HEK293 (cell line): ENCODE measurements at regions of chr6 and their contacts with region 1.

Region 1: DNA sequence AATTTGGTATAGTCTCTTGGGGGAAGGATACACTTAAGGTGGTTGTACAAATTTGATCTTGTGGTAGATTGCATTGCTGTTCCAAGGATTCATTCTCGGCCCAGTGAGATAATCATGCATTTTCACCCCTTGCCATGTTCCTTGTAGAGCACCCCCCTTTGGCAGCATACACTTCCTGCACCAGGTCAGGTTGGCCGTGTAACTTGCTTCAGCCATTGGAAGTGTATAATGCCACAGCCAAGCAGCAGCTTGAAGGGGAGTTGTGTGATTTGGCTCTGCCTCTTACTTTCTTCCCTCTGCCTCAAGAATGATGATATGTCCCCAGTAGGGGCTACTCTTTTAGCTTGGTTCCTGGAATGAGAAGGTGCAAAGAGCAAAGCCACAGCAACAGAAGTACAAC is 21.9 kb downstream of the CCN2 start:
- H3K4me3 ChIP-seq: no peak overlapping the region
- H3K27ac ChIP-seq: no peak overlapping the region
- H3K4me1 ChIP-seq: no peaks in the 10 kb centered on the region
- CTCF ChIP-seq: no peak

Region 2: DNA sequence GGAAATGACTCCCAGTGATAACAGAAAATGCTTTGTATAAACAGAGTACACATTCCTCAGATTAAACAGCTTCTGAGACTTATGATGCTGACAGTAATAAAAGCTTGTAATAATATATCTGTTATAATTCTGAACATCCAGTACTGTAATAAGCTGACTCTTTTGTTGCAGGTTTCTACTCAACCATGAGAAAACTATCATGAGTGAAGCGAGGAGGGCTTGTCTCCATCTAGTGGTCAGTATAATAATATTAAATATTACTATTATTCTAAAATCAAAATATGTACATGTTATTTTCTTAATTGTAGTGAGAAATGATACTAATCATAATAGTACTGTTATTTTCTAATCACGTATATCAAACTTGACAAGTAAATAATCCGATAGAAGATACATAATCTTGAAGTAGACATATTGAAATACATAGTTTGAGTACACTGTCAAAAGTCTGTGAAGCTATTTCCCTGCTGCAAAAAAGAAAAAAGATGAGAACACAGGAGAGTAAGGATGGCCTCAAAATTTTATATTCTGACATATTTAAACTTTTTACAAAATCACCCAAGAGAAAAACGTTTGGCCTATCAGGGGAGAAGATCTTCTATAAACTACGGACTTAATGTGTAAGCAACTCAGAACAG is 288.9 kb after region 1 on chr6:
- CTCF ChIA-PET with region 1: interaction called, 91 read pairs
- POLR2A ChIA-PET with region 1: no interaction called
- H3K4me3 ChIP-seq: no peak overlapping the region
- H3K27ac ChIP-seq: no peak overlapping the region
- H3K4me1 ChIP-seq: no peaks in the 10 kb centered on the region
- CTCF ChIP-seq: no peak